SK-N-SH (cell line): ENCODE measurements at regions of chr4 and their contacts with region 1.

Region 1: DNA sequence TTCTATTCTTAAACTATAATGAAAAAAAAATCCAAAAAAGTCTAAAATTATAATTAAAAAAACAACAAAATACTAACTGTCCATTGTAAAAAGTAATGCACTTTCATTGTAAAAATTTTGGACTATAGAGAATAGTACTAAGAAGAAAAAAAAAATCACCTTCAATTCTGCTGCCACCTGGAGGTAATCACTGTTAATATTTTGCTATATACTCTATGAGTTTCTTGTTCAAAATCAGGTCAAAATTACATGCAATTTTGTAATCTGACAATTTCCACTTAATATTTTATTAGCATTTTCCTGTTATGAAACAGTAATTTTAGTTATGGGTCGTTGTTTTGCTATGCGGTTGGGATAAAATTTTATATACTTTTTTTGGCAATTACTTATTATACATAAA is 62.0 kb downstream of the HTT start:
- DNase-seq: no peak
- H3K4me3 ChIP-seq: no peak overlapping the region
- H3K27ac ChIP-seq: no peak overlapping the region
- H3K4me1 ChIP-seq: no peaks in the 10 kb centered on the region
- H3K27me3 ChIP-seq: no peaks in the 10 kb centered on the region
- CTCF ChIP-seq: peak; percentile 62
- EP300 ChIP-seq: no peak
- RAD21 ChIP-seq: peak; percentile 12; the same call in 1 of the 2 replicates

Region 2: GRCh38 chr4:3122081-3122563 is 14.3 kb before region 1 on chr4:
- CTCF ChIA-PET with region 1: interaction called, 10 read pairs
- POLR2A ChIA-PET with region 1: no interaction called
- DNase-seq: no peak
- H3K4me3 ChIP-seq: no peak overlapping the region
- H3K27ac ChIP-seq: peak overlapping the region in 1 of 2 experiments; percentile 27; a peak in 2 of 4 replicates
- H3K4me1 ChIP-seq: peaks cover 4 to 38% of the 10 kb centered on the region in 2 experiments
- H3K27me3 ChIP-seq: no peaks in the 10 kb centered on the region
- CTCF ChIP-seq: no peak
- EP300 ChIP-seq: no peak
- RAD21 ChIP-seq: no peak

Region 3: DNA sequence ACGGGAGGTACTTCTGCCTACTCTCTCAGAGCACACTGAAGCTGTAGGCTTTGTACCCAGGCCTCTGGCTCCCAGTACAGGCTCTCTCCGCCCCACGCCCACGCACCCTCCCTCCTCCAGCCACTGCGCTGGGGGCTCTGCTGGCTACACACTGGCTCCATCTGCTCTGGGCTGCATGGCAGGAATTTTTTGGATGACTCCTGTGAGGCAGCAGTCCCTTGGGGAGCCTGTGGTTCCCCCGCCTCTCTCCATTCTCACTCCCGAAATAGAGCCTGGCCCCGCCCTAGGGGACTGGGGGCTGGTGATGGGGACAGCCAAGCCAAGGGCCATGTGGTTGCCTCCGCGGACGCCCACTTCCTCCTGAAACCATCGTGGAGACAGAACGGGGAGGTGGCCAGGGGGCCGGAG is 571.7 kb after region 1 on chr4:
- CTCF ChIA-PET with region 1: no interaction called
- POLR2A ChIA-PET with region 1: no interaction called
- DNase-seq: no peak
- H3K4me3 ChIP-seq: no peak overlapping the region
- H3K27ac ChIP-seq: peak overlapping the region in 1 of 2 experiments; percentile 99; a peak in 2 of 4 replicates
- H3K4me1 ChIP-seq: peaks cover 0 to 71% of the 10 kb centered on the region in 2 experiments; a peak in 1 of 4 replicates
- H3K27me3 ChIP-seq: no peaks in the 10 kb centered on the region
- CTCF ChIP-seq: no peak
- EP300 ChIP-seq: no peak
- RAD21 ChIP-seq: no peak